IMR-90 (cell line): ENCODE measurements at regions of chrX and their contacts with region 1.

Region 1: DNA sequence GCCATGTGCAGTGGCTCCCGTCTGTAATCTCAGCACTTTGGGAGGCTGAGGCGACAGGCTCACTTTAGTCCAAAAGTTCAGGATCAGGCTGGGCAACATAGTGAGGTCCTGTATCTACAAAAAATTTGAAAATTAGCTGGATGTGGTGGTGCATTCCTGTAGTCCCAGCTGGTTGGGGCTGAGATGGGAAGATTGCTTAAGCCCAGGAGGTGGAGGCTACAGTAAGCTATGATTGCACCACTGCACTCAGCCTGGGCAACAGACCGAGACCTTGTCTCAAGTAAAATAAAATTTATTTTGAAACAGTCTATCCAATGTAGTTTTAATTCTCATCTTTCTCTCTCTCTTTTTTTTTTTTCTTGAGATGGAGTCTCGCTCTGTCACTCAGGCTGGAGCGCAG is 21.1 kb downstream of the RBM10 start:
- DNase-seq: peak; percentile 32
- ATAC-seq: peak; percentile 50
- H3K4me3 ChIP-seq: no peak overlapping the region
- H3K27ac ChIP-seq: no peak overlapping the region
- H3K4me1 ChIP-seq: no peaks in the 10 kb centered on the region
- H3K27me3 ChIP-seq: peaks cover 7% of the 10 kb centered on the region; the same call in 1 of the 2 replicates
- CTCF ChIP-seq: no peak
- POLR2A ChIP-seq: no peak
- RAD21 ChIP-seq: no peak

Region 2: DNA sequence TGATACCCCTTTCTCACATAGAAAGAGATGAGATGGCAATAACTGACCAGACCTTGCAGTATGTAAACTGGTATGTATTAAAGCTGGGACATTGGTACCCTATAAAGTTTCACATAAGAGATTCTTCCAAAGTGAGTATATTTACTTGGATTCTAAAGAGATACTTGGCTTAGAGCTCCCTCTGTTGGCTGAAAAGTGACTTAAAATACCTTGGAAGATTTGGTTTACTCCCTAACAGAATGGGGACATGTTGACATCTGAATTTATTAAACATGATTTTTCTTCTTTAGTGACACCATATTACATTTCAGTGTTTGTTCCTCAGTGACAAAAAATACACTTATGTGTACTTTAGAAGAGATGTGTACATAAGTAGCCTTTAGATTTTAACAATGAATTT is 135.8 kb before region 1 on chrX:
- CTCF ChIA-PET with region 1: no interaction called
- POLR2A ChIA-PET with region 1: no interaction called
- dilution Hi-C with region 1: no loop called
- in situ Hi-C with region 1: no loop called
- intact Hi-C with region 1: no loop called
- DNase-seq: peak; percentile 68
- ATAC-seq: no peak
- H3K4me3 ChIP-seq: no peak overlapping the region
- H3K27ac ChIP-seq: no peak overlapping the region
- H3K4me1 ChIP-seq: no peaks in the 10 kb centered on the region
- H3K27me3 ChIP-seq: peaks cover 8% of the 10 kb centered on the region
- CTCF ChIP-seq: peak; percentile 74
- POLR2A ChIP-seq: no peak
- RAD21 ChIP-seq: peak; percentile 73

Region 3: GRCh38 chrX:47125102-47125501 is 41.0 kb before region 1 on chrX:
- CTCF ChIA-PET with region 1: no interaction called
- POLR2A ChIA-PET with region 1: interaction called, 13 read pairs
- dilution Hi-C with region 1: no loop called
- in situ Hi-C with region 1: no loop called
- intact Hi-C with region 1: no loop called
- DNase-seq: no peak
- ATAC-seq: no peak
- H3K4me3 ChIP-seq: no peak overlapping the region
- H3K27ac ChIP-seq: no peak overlapping the region
- H3K4me1 ChIP-seq: no peaks in the 10 kb centered on the region
- H3K27me3 ChIP-seq: peaks cover 6% of the 10 kb centered on the region
- CTCF ChIP-seq: no peak
- POLR2A ChIP-seq: no peak
- RAD21 ChIP-seq: no peak